Activated CD8-positive, alpha-beta T cell treated with anti-CD3 and anti-CD28 coated beads, Interleukin-2, amount 10 ng/mL, durations not matched to agents 7 days and 5 days (primary cell): ENCODE measurements at regions of chr7 and their contacts with region 1.

Region 1: GRCh38 chr7:120987683-120988590 is 574 bp upstream of the CPED1 start:
- DNase-seq: peak; percentile 91
- ATAC-seq: peak; percentile 98
- H3K4me3 Mint-ChIP-seq: peak overlapping the region; percentile 69
- H3K27ac Mint-ChIP-seq: no peak overlapping the region
- H3K4me1 Mint-ChIP-seq: peaks cover 16% of the 10 kb centered on the region
- H3K27me3 Mint-ChIP-seq: peaks cover 46% of the 10 kb centered on the region

Region 2: DNA sequence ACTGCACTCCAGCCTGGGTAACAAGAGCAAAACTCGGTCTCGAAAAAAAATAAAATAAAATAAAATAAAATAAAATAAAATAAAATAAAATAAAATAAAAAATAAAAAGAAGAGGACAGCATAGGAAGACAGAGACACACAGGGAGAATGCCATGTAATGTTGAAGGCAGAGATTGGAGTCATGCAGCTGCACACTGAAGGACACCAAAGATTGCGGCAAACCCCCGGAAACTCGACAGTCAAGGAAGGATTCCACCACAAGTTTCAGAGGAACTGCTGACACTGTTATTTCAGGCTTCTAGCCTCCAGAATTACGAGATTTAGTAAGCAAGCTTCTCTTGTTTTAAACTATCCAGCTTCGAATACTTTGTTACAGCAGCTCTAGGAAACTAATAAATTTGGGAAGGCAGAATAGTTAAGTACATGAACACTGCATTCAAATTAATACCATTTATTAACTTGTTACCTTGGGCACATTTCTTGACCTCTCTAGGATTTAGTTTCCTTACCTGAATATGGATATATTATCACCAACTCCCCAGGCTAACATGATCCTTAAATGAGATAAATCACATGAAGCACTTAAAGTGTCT is 10.0 kb after region 1 on chr7:
- CTCF ChIA-PET with region 1: interaction called, 10 read pairs
- POLR2A ChIA-PET with region 1: no interaction called
- DNase-seq: no peak
- ATAC-seq: no peak
- H3K4me3 Mint-ChIP-seq: no peak overlapping the region
- H3K27ac Mint-ChIP-seq: no peak overlapping the region
- H3K4me1 Mint-ChIP-seq: peaks cover 10% of the 10 kb centered on the region
- H3K27me3 Mint-ChIP-seq: peaks cover 16% of the 10 kb centered on the region

Region 3: GRCh38 chr7:121081327-121081936 is 93.5 kb after region 1 on chr7:
- CTCF ChIA-PET with region 1: interaction called, 46 read pairs
- POLR2A ChIA-PET with region 1: no interaction called
- DNase-seq: no peak
- ATAC-seq: no peak
- H3K4me3 Mint-ChIP-seq: no peak overlapping the region
- H3K27ac Mint-ChIP-seq: no peak overlapping the region
- H3K4me1 Mint-ChIP-seq: no peaks in the 10 kb centered on the region
- H3K27me3 Mint-ChIP-seq: peaks cover 8% of the 10 kb centered on the region

Region 4: GRCh38 chr7:121107923-121108498 is 120.1 kb after region 1 on chr7:
- CTCF ChIA-PET with region 1: interaction called, 37 read pairs
- POLR2A ChIA-PET with region 1: no interaction called
- DNase-seq: no peak
- ATAC-seq: peak; percentile 82
- H3K4me3 Mint-ChIP-seq: no peak overlapping the region
- H3K27ac Mint-ChIP-seq: no peak overlapping the region
- H3K4me1 Mint-ChIP-seq: no peaks in the 10 kb centered on the region
- H3K27me3 Mint-ChIP-seq: peaks cover 13% of the 10 kb centered on the region